ENCODE measurements at regions of chr1 and their contacts with region 1.

Region 1: GRCh38 chr1:244599937-244600350 is 53.0 kb upstream of the DESI2 start:
- DNase-seq: peak; percentile 29
- ATAC-seq: peak; percentile 89
- H3K4me3 ChIP-seq: no peak overlapping the region
- H3K4me3 Mint-ChIP-seq: peak overlapping the region; percentile 1
- H3K27ac ChIP-seq: no peak overlapping the region
- H3K27ac Mint-ChIP-seq: peak overlapping the region; percentile 76
- H3K4me1 ChIP-seq: no peaks in the 10 kb centered on the region
- H3K4me1 Mint-ChIP-seq: peaks cover 9% of the 10 kb centered on the region
- H3K27me3 ChIP-seq: no peaks in the 10 kb centered on the region
- H3K27me3 Mint-ChIP-seq: no peaks in the 10 kb centered on the region
- CTCF ChIP-seq: no peak

Region 2: GRCh38 chr1:244761279-244761678 is 161.3 kb after region 1 on chr1:
- CTCF ChIA-PET with region 1: no interaction called
- POLR2A ChIA-PET with region 1: no interaction called
- intact Hi-C with region 1: no loop called
- DNase-seq: no peak
- ATAC-seq: no peak
- H3K4me3 ChIP-seq: no peak overlapping the region
- H3K4me3 Mint-ChIP-seq: no peak overlapping the region
- H3K27ac ChIP-seq: no peak overlapping the region
- H3K27ac Mint-ChIP-seq: no peak overlapping the region
- H3K4me1 ChIP-seq: no peaks in the 10 kb centered on the region
- H3K4me1 Mint-ChIP-seq: peaks cover 5% of the 10 kb centered on the region
- H3K27me3 ChIP-seq: no peaks in the 10 kb centered on the region
- H3K27me3 Mint-ChIP-seq: peaks cover 17% of the 10 kb centered on the region
- CTCF ChIP-seq: no peak

Region 3: GRCh38 chr1:244788493-244789275 is 188.7 kb after region 1 on chr1:
- CTCF ChIA-PET with region 1: interaction called, 278 read pairs
- POLR2A ChIA-PET with region 1: no interaction called
- intact Hi-C with region 1: no loop called
- DNase-seq: peak; percentile 37
- ATAC-seq: peak; percentile 36
- H3K4me3 ChIP-seq: no peak overlapping the region
- H3K4me3 Mint-ChIP-seq: no peak overlapping the region
- H3K27ac ChIP-seq: no peak overlapping the region
- H3K27ac Mint-ChIP-seq: no peak overlapping the region
- H3K4me1 ChIP-seq: peaks cover 5 to 10% of the 10 kb centered on the region in 2 donors
- H3K4me1 Mint-ChIP-seq: peaks cover 10% of the 10 kb centered on the region
- H3K27me3 ChIP-seq: no peaks in the 10 kb centered on the region
- H3K27me3 Mint-ChIP-seq: no peaks in the 10 kb centered on the region
- CTCF ChIP-seq: no peak

Measured in B cell (primary cell).